Activated naive CD4-positive, alpha-beta T cell treated with anti-CD3 and anti-CD28 coated beads for 36 hours (primary cell): ENCODE measurements at regions of chr5 and their contacts with region 1.

Region 1: GRCh38 chr5:102583276-102584124 is 84.7 kb upstream of the SLCO6A1 start:
- DNase-seq: no peak
- H3K4me3 Mint-ChIP-seq: no peak overlapping the region
- H3K27ac Mint-ChIP-seq: no peak overlapping the region
- H3K4me1 Mint-ChIP-seq: no peaks in the 10 kb centered on the region
- H3K27me3 Mint-ChIP-seq: peaks cover 6% of the 10 kb centered on the region

Region 2: DNA sequence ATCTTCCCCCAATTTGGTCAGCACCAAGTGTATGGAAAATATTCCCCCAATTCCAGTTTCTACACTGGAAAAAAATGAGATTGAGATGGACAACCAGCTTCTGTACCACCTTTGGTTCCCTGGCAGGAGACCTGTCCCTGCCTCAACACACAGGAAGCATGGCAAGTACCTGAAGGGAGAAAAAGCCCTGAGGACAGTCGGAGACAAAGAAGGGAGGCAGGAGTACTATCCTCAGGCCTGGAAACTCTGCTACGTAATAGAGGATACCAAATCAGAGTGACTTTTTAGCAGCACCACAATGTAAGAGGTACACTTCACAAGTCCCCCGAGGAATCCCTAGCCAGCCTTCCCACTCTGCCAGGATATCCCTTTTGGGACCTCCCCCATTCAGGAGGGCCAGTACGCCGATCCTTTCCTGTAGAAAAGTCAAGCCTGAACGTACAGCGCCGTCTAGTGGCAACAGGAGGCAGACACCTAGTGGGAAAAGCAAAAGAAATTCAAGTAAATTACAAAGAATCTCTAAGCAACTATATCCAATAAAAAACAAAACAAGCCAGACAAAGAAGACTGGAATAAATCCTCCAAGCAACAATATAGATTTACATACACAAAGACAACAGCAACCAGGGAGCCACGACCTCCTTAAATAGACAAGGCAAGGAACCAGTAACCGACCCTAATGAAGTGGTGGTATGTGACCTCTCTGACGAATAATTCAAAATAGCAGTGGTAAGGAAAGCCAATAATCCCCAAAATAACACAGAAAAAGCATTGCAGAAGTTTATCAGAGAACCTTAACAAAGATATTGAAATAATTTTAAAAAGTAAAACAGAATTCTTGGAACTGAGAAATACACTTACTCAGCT is 21.4 kb before region 1 on chr5:
- CTCF ChIA-PET with region 1: no interaction called
- intact Hi-C with region 1: no loop called
- DNase-seq: peak; percentile 36
- H3K4me3 Mint-ChIP-seq: no peak overlapping the region
- H3K27ac Mint-ChIP-seq: no peak overlapping the region
- H3K4me1 Mint-ChIP-seq: no peaks in the 10 kb centered on the region
- H3K27me3 Mint-ChIP-seq: peaks cover 4% of the 10 kb centered on the region

Region 3: GRCh38 chr5:102670224-102670836 is 86.8 kb after region 1 on chr5:
- CTCF ChIA-PET with region 1: no interaction called
- intact Hi-C with region 1: loop called (anchors 1 kb)
- DNase-seq: peak; percentile 17
- H3K4me3 Mint-ChIP-seq: no peak overlapping the region
- H3K27ac Mint-ChIP-seq: no peak overlapping the region
- H3K4me1 Mint-ChIP-seq: no peaks in the 10 kb centered on the region
- H3K27me3 Mint-ChIP-seq: peaks cover 11% of the 10 kb centered on the region

Region 4: GRCh38 chr5:102792705-102793104 is 209.2 kb after region 1 on chr5:
- CTCF ChIA-PET with region 1: interaction called, 4 read pairs
- intact Hi-C with region 1: loop called (anchors 5 kb)
- DNase-seq: no peak
- H3K4me3 Mint-ChIP-seq: no peak overlapping the region
- H3K27ac Mint-ChIP-seq: no peak overlapping the region
- H3K4me1 Mint-ChIP-seq: peaks cover 20% of the 10 kb centered on the region
- H3K27me3 Mint-ChIP-seq: no peaks in the 10 kb centered on the region

Region 5: GRCh38 chr5:103041071-103041676 is 457.7 kb after region 1 on chr5:
- CTCF ChIA-PET with region 1: interaction called, 4 read pairs
- intact Hi-C with region 1: loop called (anchors 1 kb)
- DNase-seq: no peak
- H3K4me3 Mint-ChIP-seq: no peak overlapping the region
- H3K27ac Mint-ChIP-seq: no peak overlapping the region
- H3K4me1 Mint-ChIP-seq: no peaks in the 10 kb centered on the region
- H3K27me3 Mint-ChIP-seq: no peaks in the 10 kb centered on the region

Region 6: DNA sequence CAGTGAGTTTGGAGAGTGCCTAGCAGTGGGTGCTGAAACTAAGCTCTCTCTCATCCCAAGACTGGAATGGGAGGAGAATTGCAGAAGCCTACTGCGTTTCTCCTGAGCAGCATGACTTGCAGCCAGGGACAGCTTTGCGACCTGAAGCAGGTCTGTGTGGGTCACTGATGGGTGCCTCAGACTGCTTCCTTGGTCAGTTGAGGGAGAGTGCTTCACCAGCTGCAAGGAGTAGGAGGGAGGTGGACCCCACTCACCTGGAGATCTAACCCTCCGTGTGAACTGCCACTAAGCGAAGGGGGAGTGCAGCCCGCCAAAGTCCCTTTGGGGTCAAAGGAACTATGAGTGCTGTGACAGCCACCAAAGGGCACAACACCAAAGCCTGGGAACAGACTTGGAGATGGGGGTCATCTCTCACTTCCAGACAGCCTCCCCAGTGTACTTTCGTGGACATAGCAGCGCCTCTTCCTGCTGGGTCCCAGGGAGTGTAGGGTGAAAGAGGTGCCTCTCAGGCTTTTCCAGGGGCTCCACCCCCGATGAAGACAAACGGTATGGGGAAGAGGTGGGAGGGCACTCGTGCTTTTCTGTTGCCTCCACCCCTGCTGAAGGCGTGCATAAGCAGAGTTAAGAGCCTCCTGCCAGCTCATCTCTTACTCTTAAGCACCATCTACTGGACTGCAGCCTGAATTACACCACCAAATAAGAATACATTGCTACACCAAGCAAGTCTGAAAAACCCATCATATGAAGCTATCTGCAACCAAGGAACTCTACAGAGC is 640.8 kb after region 1 on chr5:
- CTCF ChIA-PET with region 1: interaction called, 4 read pairs
- intact Hi-C with region 1: loop called (anchors 1 kb)
- DNase-seq: peak; percentile 44
- H3K4me3 Mint-ChIP-seq: no peak overlapping the region
- H3K27ac Mint-ChIP-seq: no peak overlapping the region
- H3K4me1 Mint-ChIP-seq: no peaks in the 10 kb centered on the region
- H3K27me3 Mint-ChIP-seq: peaks cover 15% of the 10 kb centered on the region